Cardiac septum (tissue), 1 donor: ENCODE measurements at regions of chr6 and their contacts with region 1.

Region 1: DNA sequence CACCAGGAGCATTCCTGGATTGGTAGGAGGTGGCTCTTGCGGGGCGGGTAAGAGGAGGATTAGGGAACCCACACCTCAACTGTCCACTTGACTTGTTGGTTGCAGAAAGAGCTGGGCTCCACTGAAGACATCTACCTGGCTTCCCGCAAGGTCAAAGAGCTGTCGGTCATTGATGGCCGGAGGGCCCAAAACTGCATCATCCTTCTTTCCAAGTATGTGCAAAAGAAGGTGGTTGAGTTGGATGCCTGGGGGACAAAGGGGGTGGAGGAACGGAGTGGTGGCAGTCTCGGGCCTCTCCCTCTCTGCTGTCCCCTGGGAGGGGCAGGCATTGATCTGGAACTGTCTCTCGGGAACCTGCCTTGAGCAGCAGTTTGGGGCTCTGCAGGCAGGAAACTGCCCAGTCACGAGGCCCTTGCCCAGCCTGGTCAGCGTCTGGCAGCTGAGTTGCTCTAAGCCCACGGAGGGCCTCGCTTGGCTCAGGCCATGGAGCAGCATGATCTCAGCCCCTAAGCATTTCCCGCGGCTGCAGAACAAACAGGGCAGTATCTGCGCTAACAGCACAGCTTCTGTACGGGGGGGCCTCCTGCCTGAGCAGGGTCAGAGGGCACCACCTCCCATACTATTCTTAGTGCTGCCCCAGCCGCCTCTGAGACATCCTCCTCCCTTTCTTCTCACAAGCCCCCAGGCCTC is 46.7 kb downstream of the MOCS1 start:
- DNase-seq: peak; percentile 93

Region 2: DNA sequence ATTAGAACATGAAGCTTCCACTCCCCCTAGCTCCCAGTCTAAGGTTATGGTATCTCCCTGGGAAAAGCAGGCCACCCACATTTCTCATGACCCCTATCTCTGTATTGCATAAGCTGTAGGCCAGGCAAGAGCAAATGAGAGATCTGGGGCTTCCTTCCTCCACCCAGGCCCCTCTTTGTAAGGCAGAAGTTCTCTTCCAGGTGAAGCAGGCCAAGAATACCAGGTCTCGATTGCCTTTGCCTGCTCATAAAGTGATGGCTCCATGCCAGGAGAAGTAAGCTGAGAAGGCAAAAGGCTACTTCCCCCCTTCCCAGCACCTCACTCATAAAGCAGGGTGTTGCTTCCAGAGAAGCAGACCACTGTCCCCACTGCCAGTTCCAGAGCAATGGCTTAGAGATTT is 420.9 kb before region 1 on chr6:
- intact Hi-C with region 1: no loop called
- DNase-seq: no peak

Region 3: GRCh38 chr6:39520411-39520810 is 367.1 kb before region 1 on chr6:
- intact Hi-C with region 1: no loop called
- DNase-seq: no peak

Region 4: DNA sequence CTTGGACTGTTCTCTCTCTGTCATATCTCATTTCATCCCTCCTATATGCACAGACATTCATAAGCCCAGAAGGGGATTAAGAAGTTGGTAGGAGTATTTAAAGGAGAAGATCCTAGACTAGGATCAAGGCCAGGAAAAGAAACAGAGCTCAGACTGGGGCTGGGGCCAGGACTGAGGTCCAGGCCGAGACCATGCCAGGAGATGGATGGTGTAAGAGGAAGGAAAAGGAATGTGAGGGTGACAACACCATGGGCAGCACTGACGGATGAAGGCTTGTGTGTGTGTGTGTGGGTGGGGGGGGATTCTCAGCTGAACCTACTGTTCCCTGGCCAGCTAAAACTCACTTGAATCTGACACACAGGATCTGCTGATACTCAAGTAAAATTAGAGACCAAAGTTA is 344.4 kb before region 1 on chr6:
- intact Hi-C with region 1: loop called (anchors 10 kb)
- DNase-seq: no peak

Region 5: GRCh38 chr6:39902786-39903465 is 15.4 kb after region 1 on chr6:
- intact Hi-C with region 1: no loop called
- DNase-seq: peak; percentile 59